Activated B cell treated with CpG ODN at 0.5 μM for 24 hours (primary cell): ENCODE measurements at regions of chr15 and their contacts with region 1.

Region 1: DNA sequence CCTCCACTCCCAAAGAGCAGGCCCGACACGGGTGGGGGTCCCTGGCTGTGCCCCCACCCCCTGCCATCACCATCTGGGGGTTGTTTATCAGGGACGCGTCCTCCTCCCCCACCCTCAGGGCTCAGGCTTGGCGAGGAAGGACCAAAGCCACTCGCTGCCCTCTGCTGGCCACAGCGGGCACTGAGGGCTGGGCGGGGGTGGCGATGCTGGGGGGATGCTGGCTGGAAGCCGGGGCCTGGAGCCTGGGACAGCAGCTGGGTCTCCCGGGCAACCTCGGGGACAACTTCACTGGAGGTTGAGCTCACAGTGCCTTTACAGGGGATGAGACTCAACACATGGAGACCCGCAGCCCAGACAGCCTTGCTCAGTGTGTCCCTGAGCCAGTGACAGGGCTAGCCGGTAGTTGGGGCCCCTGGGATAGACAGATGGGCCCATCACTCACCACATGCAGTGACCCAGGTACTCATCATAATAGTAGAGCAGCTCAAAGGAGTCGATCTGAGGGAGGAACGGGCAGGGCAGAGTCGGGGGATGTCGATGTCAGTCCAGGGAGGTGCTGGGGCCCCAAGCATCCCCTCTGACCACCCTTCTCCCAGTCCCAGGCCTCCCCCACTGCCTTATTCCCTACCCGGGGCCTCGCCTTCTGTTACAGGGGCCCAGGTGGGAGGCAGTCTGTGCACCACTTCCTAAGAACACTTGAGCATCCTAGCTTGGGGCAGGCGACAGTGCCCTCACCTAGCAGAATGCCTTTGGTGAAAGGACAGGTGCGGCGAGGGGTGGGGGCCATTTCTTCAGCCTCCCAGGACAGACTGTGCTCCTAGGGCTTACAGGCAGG is 5.9 kb upstream of the CALML4 start:
- DNase-seq: peak; percentile 49
- ATAC-seq: peak; percentile 49
- H3K4me3 Mint-ChIP-seq: no peak overlapping the region
- H3K27ac Mint-ChIP-seq: no peak overlapping the region
- H3K4me1 Mint-ChIP-seq: peaks cover 32% of the 10 kb centered on the region
- H3K27me3 Mint-ChIP-seq: no peaks in the 10 kb centered on the region
- CTCF ChIP-seq: no peak

Region 2: GRCh38 chr15:68224108-68224507 is 13.1 kb after region 1 on chr15:
- CTCF ChIA-PET with region 1: interaction called, 5 read pairs
- POLR2A ChIA-PET with region 1: interaction called, 12 read pairs
- intact Hi-C with region 1: loop called (anchors 1 kb)
- DNase-seq: no peak
- ATAC-seq: no peak
- H3K4me3 Mint-ChIP-seq: no peak overlapping the region
- H3K27ac Mint-ChIP-seq: no peak overlapping the region
- H3K4me1 Mint-ChIP-seq: peaks cover 35% of the 10 kb centered on the region
- H3K27me3 Mint-ChIP-seq: no peaks in the 10 kb centered on the region
- CTCF ChIP-seq: no peak

Region 3: DNA sequence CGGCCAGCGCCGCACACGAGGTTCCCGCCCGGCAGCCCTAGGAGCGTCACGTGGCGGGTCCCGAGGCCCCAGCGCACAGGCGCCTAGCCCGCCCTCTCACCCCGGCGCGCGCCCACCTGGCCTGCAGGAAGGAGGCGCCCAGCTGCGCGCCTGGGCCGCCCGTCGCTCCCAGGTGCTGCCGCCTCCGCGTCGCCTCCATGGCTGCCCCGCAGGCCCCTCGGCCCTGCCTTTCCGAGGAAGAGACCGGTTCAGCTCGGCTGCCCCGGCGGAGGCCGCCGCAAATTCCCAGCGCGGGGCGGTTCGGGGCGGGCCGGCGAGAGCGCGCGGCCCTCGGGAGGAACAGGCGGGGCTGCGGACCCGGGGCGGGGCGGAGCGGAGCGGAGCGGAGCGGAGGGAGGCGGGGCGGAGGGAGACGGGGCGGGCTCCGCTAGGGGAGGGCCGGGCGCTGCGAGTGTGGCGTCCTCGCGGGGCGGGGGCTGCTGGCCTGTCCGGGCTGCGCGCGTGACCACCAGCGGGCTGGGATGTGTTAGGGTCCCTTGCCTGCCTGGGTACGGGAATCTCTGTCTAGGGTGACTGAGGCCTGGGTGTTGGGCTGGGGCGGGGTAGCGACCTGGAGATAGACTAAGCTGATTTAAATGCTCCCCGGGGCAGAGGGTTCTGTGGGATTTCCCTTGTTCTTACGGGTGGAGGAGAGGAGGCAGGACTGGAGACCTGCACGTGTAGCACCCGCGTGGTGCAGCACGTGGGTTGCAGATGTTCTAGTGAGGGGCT is 18.5 kb after region 1 on chr15 and contains the start of gene CLN6:
- CTCF ChIA-PET with region 1: no interaction called
- POLR2A ChIA-PET with region 1: interaction called, 3 read pairs
- intact Hi-C with region 1: loop called (anchors 1 kb)
- DNase-seq: peak; percentile 85
- ATAC-seq: peak; percentile 88
- H3K4me3 Mint-ChIP-seq: peak within 1 kb of the TSS; percentile 92
- H3K27ac Mint-ChIP-seq: peak within 1 kb of the TSS; percentile 89
- H3K4me1 Mint-ChIP-seq: peaks cover 50% of the 10 kb centered on the region
- H3K27me3 Mint-ChIP-seq: no peaks in the 10 kb centered on the region
- CTCF ChIP-seq: no peak
- total RNA-seq, gene CLN6: 35.0 and 37.5 TPM in 2 replicates

Region 4: DNA sequence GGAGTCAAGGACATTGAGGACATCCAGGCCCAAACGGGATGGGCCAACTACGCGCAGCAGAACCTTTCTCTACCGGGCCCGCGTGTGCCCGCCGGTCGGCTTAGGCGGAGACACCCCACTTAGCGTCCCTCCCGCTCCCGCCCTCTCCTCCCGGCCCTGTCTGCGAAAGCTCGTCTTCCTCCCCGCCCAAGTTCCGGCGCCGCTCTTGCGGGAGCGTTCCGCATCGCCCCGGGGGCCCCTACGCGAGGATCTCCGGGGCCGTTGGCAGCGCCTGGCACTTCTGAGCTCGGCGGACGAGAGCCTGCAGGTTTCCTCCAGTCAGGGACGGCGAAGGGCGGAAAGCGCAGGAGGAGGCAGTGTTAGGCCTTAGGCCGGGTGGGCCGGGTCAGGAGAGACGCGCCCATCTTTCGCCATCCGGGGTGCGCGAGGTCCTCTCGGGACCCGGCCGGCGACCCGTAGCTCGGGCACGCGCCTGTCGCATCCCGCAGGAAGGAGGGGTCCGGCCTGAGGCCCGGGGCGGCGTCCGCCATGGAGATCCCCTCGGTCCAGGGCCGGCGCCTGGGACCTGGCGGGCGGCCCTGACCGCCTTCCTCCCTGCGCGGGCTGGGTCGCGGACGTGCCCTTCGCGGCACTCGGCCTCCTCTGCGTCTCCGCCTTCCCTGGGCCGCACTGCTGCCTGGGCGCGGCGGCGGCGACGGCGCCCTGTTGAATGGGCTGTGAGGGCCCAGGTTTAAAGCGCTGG is 66.7 kb after region 1 on chr15 and contains the start of gene FEM1B:
- CTCF ChIA-PET with region 1: no interaction called
- POLR2A ChIA-PET with region 1: no interaction called
- intact Hi-C with region 1: no loop called
- DNase-seq: peak; percentile 88
- ATAC-seq: peak; percentile 81
- H3K4me3 Mint-ChIP-seq: peak within 1 kb of the TSS; percentile 93
- H3K27ac Mint-ChIP-seq: peak within 1 kb of the TSS; percentile 96
- H3K4me1 Mint-ChIP-seq: peaks cover 55% of the 10 kb centered on the region
- H3K27me3 Mint-ChIP-seq: no peaks in the 10 kb centered on the region
- CTCF ChIP-seq: no peak
- total RNA-seq, gene FEM1B: 42.2 and 47.7 TPM in 2 replicates